ENCODE measurements at regions of chr6 and their contacts with region 1.

Region 1: DNA sequence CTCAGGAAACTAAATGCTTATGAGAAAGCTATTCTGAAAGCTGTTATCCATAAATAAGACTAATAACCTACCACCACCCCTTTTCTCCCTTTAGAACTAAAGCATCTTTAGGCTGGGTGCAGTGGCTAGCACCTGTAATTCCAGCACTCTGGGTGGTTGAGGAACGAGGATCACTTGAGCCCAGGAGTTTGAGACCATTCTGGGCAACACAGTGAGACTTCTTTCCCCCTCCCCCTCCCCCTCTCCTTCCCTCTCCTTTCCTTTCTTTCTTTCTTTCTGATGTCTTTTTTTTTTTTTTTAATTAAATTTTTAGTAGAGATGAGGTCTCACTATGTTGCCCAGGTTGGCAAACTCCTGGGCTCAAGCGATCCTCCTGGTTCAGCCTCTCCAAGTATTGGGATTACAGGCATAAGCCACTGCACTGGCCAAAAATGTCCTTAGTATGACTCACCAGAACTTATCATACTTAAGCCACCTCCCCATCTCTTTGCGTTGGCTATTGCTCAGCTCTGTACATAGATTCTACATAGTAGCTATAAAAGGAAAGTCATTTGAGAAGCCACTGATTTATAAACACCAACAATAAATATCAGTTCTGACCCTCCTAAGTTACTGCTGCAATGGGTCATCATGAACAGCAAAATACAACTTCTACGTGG is 54.8 kb upstream of the SPDEF start:
- DNase-seq: no peak
- ATAC-seq: no peak
- H3K4me3 ChIP-seq: no peak overlapping the region
- H3K27ac ChIP-seq: no peak overlapping the region
- H3K4me1 ChIP-seq: peaks cover 3% of the 10 kb centered on the region; the same call in 1 of the 2 replicates
- H3K27me3 ChIP-seq: no peaks in the 10 kb centered on the region
- CTCF ChIP-seq: no peak
- EP300 ChIP-seq: no peak
- POLR2A ChIP-seq: no peak
- RAD21 ChIP-seq: no peak

Region 2: DNA sequence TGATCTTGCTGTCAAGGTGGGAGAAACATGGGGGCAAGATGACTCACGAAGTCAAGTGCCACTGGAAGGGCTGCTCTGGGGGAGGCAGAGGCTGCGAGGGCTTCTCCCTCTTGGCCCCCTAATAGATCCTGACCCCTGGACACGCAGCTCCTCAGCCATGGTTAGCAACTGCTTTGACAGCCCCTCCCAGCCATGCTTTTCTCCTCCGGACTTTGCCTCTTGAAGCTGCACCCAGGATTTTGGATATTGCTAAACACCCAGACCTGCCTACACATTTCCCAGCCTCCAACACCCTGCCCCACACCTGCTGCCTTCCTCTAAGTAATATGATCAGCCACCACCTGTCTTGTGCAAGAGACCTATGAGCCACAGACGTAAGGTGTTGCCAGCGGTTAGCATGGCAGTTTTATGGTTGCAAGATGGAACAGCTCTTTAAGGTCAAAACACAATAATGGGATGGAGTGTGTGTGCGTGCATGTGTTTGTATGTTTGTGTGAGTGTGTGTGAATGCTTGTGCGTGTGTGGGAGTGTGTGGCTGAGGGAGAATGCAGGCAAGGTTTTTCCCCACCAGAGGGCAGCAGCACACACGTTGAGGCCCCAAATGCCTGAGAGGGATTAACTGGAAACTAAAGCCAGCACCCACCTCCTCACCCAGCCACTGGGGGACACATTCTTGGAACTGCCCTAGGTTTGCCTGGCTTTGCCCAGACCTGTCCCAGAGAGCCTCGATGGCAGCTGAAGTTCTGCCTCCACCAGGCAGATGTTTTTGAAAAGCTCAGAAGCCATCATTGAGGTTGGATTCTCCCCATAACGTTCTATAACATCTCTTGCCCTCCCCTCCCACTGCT is 866.7 kb before region 1 on chr6:
- CTCF ChIA-PET with region 1: no interaction called
- POLR2A ChIA-PET with region 1: no interaction called
- RAD21 ChIA-PET with region 1: no interaction called
- SMC1A ChIA-PET with region 1: no interaction called
- in situ Hi-C with region 1: no loop called
- intact Hi-C with region 1: no loop called
- DNase-seq: no peak
- ATAC-seq: peak; percentile 94
- H3K4me3 ChIP-seq: no peak overlapping the region
- H3K27ac ChIP-seq: no peak overlapping the region
- H3K4me1 ChIP-seq: no peaks in the 10 kb centered on the region
- H3K27me3 ChIP-seq: no peaks in the 10 kb centered on the region; a peak in 2 of 4 replicates
- CTCF ChIP-seq: peak; percentile 90 to 97 (median 91)
- EP300 ChIP-seq: no peak
- POLR2A ChIP-seq: no peak
- RAD21 ChIP-seq: peak; percentile 62

Region 3: DNA sequence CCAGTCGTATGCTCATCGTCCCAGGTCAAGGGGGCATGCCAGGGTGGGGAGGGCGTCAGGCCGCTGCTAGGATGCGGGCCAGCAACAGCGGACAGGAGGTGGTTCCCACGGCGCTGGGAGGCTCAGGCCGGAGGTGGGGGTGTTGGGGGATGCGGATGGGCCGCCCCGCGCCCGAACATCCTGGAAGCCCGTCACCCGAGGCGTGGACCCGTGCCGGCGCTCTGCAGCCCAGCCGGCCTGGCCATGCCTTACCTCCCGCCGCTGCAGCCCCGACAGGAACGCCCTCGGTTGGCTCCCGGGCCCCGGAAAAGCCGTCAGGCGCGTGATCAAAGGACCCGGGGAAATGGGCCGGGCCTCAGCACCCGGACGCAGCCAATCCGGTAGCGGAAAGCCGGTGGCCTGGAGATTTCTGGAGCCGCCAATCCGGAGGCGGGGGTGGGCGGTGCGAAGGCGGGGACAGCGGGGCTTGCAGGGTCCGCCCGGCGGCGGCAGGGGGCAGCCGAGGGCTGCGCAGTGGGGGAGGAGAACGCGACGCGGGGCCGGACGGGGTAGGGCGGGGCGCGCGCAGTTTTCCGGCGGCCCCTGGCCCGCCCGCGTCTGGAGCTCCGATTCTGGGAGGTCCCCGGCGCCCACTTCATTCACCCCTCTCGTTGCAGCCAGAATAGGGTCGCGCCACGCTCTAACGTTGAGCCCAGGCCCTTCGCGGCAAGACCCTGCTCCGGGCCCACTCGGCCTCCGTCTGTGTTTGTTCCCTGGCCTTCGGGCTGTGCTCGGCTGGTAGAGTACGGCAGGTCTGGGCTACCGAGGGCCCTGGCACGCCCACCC is 362.0 kb before region 1 on chr6 and contains the start of gene SMIM29:
- CTCF ChIA-PET with region 1: interaction called, 15 read pairs
- POLR2A ChIA-PET with region 1: no interaction called
- RAD21 ChIA-PET with region 1: interaction called, 7 read pairs
- SMC1A ChIA-PET with region 1: interaction called, 12 read pairs
- in situ Hi-C with region 1: loop called (anchors 25 kb)
- intact Hi-C with region 1: loop called (anchors 5 kb)
- DNase-seq: peak; percentile 62
- ATAC-seq: peak; percentile 88
- H3K4me3 ChIP-seq: peak within 1 kb of the TSS; percentile 84
- H3K27ac ChIP-seq: peak within 1 kb of the TSS; percentile 78
- H3K4me1 ChIP-seq: peaks cover 19% of the 10 kb centered on the region
- H3K27me3 ChIP-seq: no peaks in the 10 kb centered on the region
- CTCF ChIP-seq: peak; percentile 82 to 86 (median 86)
- EP300 ChIP-seq: no peak
- POLR2A ChIP-seq: peak; percentile 91
- RAD21 ChIP-seq: peak; percentile 81
- polyA plus RNA-seq, gene SMIM29: 7.1 to 8.4 TPM

Region 4: GRCh38 chr6:34526992-34527728 is 83.8 kb before region 1 on chr6:
- CTCF ChIA-PET with region 1: interaction called, 18 read pairs
- POLR2A ChIA-PET with region 1: no interaction called
- RAD21 ChIA-PET with region 1: interaction called, 3 read pairs
- SMC1A ChIA-PET with region 1: interaction called, 19 read pairs
- in situ Hi-C with region 1: no loop called
- intact Hi-C with region 1: loop called (anchors 1 kb)
- DNase-seq: peak; percentile 54
- ATAC-seq: peak; percentile 99
- H3K4me3 ChIP-seq: no peak overlapping the region
- H3K27ac ChIP-seq: no peak overlapping the region
- H3K4me1 ChIP-seq: no peaks in the 10 kb centered on the region
- H3K27me3 ChIP-seq: no peaks in the 10 kb centered on the region
- CTCF ChIP-seq: peak; percentile 49 to 82 (median 77)
- EP300 ChIP-seq: no peak
- POLR2A ChIP-seq: 0 out of 2 replicates have a peak, but pooled peaks have one; percentile 38
- RAD21 ChIP-seq: peak; percentile 40; the same call in 1 of the 2 replicates

Region 5: GRCh38 chr6:34536951-34537848 is 73.7 kb before region 1 on chr6:
- CTCF ChIA-PET with region 1: no interaction called
- POLR2A ChIA-PET with region 1: no interaction called
- RAD21 ChIA-PET with region 1: no interaction called
- SMC1A ChIA-PET with region 1: no interaction called
- in situ Hi-C with region 1: no loop called
- intact Hi-C with region 1: no loop called
- DNase-seq: no peak
- ATAC-seq: no peak
- H3K4me3 ChIP-seq: no peak overlapping the region
- H3K27ac ChIP-seq: no peak overlapping the region
- H3K4me1 ChIP-seq: no peaks in the 10 kb centered on the region
- H3K27me3 ChIP-seq: no peaks in the 10 kb centered on the region; a peak in 1 of 4 replicates
- CTCF ChIP-seq: no peak
- EP300 ChIP-seq: no peak
- POLR2A ChIP-seq: no peak
- RAD21 ChIP-seq: no peak

Region 6: DNA sequence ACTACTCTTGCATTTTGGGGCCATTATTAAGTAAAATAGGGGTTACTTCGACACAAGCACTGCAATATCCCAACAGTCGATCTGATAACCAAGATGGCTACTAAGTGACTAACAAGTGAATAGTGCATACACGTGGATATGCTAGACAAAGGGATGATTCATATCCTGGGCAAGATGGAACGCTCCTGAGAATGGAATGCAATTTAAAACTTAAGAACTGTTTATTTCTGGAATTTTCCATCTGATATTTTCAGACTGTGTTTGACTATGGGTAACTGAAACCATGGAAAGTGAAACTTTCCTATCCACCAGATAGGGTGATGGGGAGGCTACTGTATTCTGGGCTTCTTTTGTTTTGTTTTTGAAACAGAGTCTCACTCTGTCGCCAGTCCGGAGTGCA is 19.1 kb after region 1 on chr6:
- CTCF ChIA-PET with region 1: interaction called, 22 read pairs
- POLR2A ChIA-PET with region 1: interaction called, 3 read pairs
- RAD21 ChIA-PET with region 1: interaction called, 4 read pairs
- SMC1A ChIA-PET with region 1: interaction called, 38 read pairs
- in situ Hi-C with region 1: no loop called
- intact Hi-C with region 1: no loop called
- DNase-seq: no peak
- ATAC-seq: no peak
- H3K4me3 ChIP-seq: no peak overlapping the region
- H3K27ac ChIP-seq: no peak overlapping the region
- H3K4me1 ChIP-seq: no peaks in the 10 kb centered on the region
- H3K27me3 ChIP-seq: no peaks in the 10 kb centered on the region
- CTCF ChIP-seq: no peak
- EP300 ChIP-seq: no peak
- POLR2A ChIP-seq: no peak
- RAD21 ChIP-seq: no peak

Region 7: GRCh38 chr6:34650823-34651222 is 39.9 kb after region 1 on chr6:
- CTCF ChIA-PET with region 1: interaction called, 11 read pairs
- POLR2A ChIA-PET with region 1: interaction called, 3 read pairs
- RAD21 ChIA-PET with region 1: interaction called, 20 read pairs
- SMC1A ChIA-PET with region 1: interaction called, 20 read pairs
- in situ Hi-C with region 1: no loop called
- intact Hi-C with region 1: no loop called
- DNase-seq: no peak
- ATAC-seq: no peak
- H3K4me3 ChIP-seq: no peak overlapping the region
- H3K27ac ChIP-seq: peak overlapping the region; percentile 71
- H3K4me1 ChIP-seq: peaks cover 35% of the 10 kb centered on the region
- H3K27me3 ChIP-seq: no peaks in the 10 kb centered on the region
- CTCF ChIP-seq: no peak
- EP300 ChIP-seq: no peak
- POLR2A ChIP-seq: no peak
- RAD21 ChIP-seq: no peak

Region 8: DNA sequence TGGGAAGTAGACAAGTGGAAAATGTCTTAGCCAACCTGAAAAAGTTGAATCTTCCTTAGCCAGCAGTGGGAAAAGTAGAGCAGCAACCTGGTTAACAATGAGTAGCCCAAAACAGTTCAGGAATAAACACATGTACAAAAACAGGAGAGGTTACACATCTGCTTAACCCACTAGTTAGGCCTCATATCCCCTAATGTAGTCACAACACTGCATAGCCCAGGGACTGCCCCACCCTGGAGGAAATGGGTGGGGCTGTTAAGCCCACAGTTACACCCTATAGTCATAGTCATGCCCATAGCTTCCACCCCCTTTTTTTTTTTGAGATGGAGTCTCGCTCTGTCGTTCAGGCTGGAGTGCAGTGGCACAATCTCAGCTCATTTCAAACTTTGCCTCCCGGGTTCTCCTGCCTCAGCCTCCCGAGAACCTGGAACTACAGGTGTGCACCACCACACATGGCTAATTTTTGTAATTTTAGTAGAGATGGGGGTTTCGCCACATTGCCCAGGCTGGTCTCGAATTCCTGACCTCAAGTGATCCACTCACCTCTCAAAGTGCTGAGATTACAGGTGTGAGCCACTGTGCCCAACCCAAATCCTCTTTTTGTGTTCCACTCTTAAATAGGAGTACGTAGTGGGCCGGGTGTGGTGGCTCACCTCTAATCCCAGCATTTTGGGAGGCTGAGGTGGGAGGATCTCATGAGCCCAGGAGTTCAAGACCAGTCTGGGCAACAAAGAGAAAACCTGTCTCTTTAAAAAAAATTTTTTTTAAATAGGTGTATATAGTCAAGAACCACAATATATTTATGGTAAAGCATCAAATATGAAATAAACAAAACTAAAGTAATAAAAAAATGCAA is 61.1 kb after region 1 on chr6:
- CTCF ChIA-PET with region 1: interaction called, 5 read pairs
- POLR2A ChIA-PET with region 1: interaction called, 3 read pairs
- RAD21 ChIA-PET with region 1: no interaction called
- SMC1A ChIA-PET with region 1: interaction called, 18 read pairs
- in situ Hi-C with region 1: no loop called
- intact Hi-C with region 1: no loop called
- DNase-seq: peak; percentile 84
- ATAC-seq: peak; percentile 88
- H3K4me3 ChIP-seq: peak overlapping the region; percentile 46
- H3K27ac ChIP-seq: peak overlapping the region; percentile 92
- H3K4me1 ChIP-seq: peaks cover 38% of the 10 kb centered on the region
- H3K27me3 ChIP-seq: no peaks in the 10 kb centered on the region
- CTCF ChIP-seq: no peak
- EP300 ChIP-seq: peak; percentile 39 to 44; a peak in 2 of 4 replicates
- POLR2A ChIP-seq: peak; percentile 35; the same call in 1 of the 2 replicates
- RAD21 ChIP-seq: no peak

Region 9: DNA sequence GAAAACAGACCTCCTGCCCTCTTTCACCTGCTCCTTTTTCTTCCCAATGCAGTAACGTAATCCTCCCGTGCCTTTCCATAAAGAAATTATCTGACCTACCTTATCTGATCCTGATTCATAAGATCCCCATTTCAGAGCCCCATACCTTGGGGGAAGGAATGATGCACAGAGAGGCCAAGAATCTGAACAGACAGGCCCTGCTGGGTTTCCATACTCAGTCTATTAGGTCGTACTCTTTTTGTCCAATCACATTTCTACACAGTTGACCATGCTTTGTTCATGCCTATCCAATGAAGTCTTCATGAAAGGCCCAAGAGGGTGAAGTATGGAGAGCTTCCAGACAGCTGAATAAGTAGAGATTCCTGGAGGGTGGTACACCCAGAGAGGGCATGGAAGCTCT is 1284.6 kb after region 1 on chr6:
- CTCF ChIA-PET with region 1: no interaction called
- POLR2A ChIA-PET with region 1: no interaction called
- RAD21 ChIA-PET with region 1: no interaction called
- SMC1A ChIA-PET with region 1: no interaction called
- in situ Hi-C with region 1: no loop called
- intact Hi-C with region 1: no loop called
- DNase-seq: no peak
- ATAC-seq: no peak
- H3K4me3 ChIP-seq: no peak overlapping the region
- H3K27ac ChIP-seq: no peak overlapping the region
- H3K4me1 ChIP-seq: no peaks in the 10 kb centered on the region; the same call in 1 of the 2 replicates
- H3K27me3 ChIP-seq: no peaks in the 10 kb centered on the region
- CTCF ChIP-seq: no peak
- EP300 ChIP-seq: no peak
- POLR2A ChIP-seq: no peak
- RAD21 ChIP-seq: no peak